Activated naive CD8-positive, alpha-beta T cell treated with anti-CD3 and anti-CD28 coated beads, Interleukin-2, amount 10 ng/mL, durations not matched to agents 7 days and 5 days (primary cell): ENCODE measurements at regions of chr19 and their contacts with region 1.

Region 1: GRCh38 chr19:34677386-34678084 is at the start of gene ZNF302:
- DNase-seq: peak; percentile 95
- ATAC-seq: peak; percentile 83
- H3K4me3 Mint-ChIP-seq: peak within 1 kb of the TSS; percentile 91
- H3K27ac Mint-ChIP-seq: peak within 1 kb of the TSS; percentile 92
- H3K4me1 Mint-ChIP-seq: peaks cover 11% of the 10 kb centered on the region
- H3K27me3 Mint-ChIP-seq: peaks cover 4% of the 10 kb centered on the region
- total RNA-seq, gene ZNF302: 28.2 to 31.2 TPM

Region 2: GRCh38 chr19:34733826-34734600 is 56.5 kb after region 1 on chr19 and contains the start of gene ZNF181:
- POLR2A ChIA-PET with region 1: interaction called, 12 read pairs
- DNase-seq: peak; percentile 81
- ATAC-seq: peak; percentile 90
- H3K4me3 Mint-ChIP-seq: peak within 1 kb of the TSS; percentile 97
- H3K27ac Mint-ChIP-seq: peak within 1 kb of the TSS; percentile 97
- H3K4me1 Mint-ChIP-seq: peaks cover 19% of the 10 kb centered on the region
- H3K27me3 Mint-ChIP-seq: no peaks in the 10 kb centered on the region
- total RNA-seq, gene ZNF181: 10.6 to 11.4 TPM